Activated T-helper 1 cell treated with anti-CD3 and anti-CD28 coated beads, Interleukin-12 subunit alpha, Interleukin-12 subunit beta, Interleukin-2, Interleukin-4 antibody, amounts not matched to agents 30 ng/mL and 10 ng/mL and 1 ng/mL, durations not matched to agents 14 hours and 24 hours and 36 hours (primary cell): ENCODE measurements at regions of chr3 and their contacts with region 1.

Region 1: GRCh38 chr3:187974871-187975271 is 179.1 kb upstream of the LPP start:
- DNase-seq: no peak
- H3K4me3 Mint-ChIP-seq: peak overlapping the region; percentile 59
- H3K27ac Mint-ChIP-seq: peak overlapping the region; percentile 94
- H3K4me1 Mint-ChIP-seq: peaks cover 62% of the 10 kb centered on the region
- H3K27me3 Mint-ChIP-seq: peaks cover 2% of the 10 kb centered on the region

Region 2: GRCh38 chr3:187745201-187746058 is 229.4 kb before region 1 on chr3 and contains the start of gene BCL6:
- intact Hi-C with region 1: loop called (anchors 1 kb)
- DNase-seq: peak; percentile 88
- H3K4me3 Mint-ChIP-seq: peak within 1 kb of the TSS; percentile 96
- H3K27ac Mint-ChIP-seq: peak within 1 kb of the TSS; percentile 98
- H3K4me1 Mint-ChIP-seq: peaks cover 73% of the 10 kb centered on the region
- H3K27me3 Mint-ChIP-seq: no peaks in the 10 kb centered on the region
- total RNA-seq, gene BCL6: 38.8 and 42.1 TPM in 2 replicates

Region 3: DNA sequence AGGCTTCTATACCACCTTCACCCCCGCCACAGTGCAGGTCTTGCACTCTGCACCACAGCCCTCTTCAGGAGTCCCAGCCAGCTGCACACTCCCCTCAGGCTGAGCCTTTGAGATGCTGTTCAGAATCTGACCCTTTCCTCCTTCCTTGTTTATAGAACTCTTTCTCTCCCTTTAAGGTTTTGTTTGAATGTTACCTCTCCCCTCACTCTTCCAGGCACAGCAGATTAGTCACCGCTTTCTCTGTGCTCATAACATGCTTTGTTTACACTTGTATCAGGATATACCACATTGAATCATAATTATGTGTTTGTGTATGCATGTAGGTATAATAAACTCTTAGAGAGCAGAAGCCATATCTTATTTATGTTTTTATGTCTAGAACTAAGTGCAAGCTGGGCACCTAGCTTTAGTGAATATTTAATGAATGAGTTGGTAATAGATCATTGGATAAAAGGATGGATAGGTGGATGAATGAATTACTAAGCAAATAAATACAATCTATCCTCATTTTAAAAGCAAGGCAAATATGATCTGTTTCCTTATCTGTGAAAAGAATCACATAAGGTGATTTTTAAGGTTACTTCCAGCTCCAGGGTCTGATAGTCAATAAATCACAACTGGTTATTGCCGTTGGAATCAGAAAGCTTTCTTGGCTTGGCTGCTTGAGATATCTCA is 61.1 kb before region 1 on chr3:
- intact Hi-C with region 1: no loop called
- DNase-seq: no peak
- H3K4me3 Mint-ChIP-seq: no peak overlapping the region
- H3K27ac Mint-ChIP-seq: peak overlapping the region; percentile 22
- H3K4me1 Mint-ChIP-seq: peaks cover 68% of the 10 kb centered on the region
- H3K27me3 Mint-ChIP-seq: peaks cover 3% of the 10 kb centered on the region

Region 4: GRCh38 chr3:187935623-187936156 is 39.2 kb before region 1 on chr3:
- intact Hi-C with region 1: loop called (anchors 1 kb)
- DNase-seq: no peak
- H3K4me3 Mint-ChIP-seq: peak overlapping the region; percentile 40
- H3K27ac Mint-ChIP-seq: no peak overlapping the region
- H3K4me1 Mint-ChIP-seq: peaks cover 19% of the 10 kb centered on the region
- H3K27me3 Mint-ChIP-seq: peaks cover 13% of the 10 kb centered on the region

Region 5: DNA sequence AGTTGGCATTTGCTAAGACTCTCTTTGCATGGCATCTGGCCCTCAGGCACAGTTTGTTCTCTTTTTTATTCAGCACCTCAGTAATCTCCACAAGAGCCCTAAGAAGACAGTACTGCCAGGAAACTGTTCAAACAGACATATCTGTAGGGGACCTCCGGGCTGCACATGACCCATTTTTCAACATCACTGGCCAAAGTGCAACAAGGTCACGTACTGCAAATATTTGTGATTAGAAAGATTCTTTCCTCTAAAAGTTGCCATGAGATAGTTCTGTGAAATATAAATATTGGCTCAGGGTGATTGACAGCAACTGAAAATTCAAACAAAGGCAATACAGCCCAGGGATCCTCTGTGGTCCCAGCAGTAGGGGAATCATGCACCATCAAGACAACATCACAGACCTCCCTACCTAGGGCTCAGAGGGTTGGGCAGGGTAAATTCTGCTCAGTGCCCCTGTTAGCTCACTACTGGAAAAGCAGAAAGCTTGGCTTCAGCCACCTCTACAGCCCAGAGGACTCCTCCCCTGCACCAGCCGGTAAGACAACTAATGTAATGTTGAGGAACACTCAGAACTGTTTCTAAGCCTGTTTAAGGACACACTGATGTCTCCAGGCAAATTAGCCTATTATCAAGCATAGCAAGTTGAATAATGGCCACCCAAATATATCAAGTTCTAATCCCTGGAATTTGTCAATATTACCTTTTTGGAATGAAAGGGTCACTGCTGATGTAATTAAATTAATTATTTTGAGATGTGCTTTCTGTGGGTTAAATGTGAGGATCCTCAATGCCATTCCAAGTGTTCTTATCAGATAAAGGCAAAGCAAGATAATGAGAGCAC is 61.7 kb after region 1 on chr3:
- intact Hi-C with region 1: no loop called
- DNase-seq: no peak
- H3K4me3 Mint-ChIP-seq: no peak overlapping the region
- H3K27ac Mint-ChIP-seq: no peak overlapping the region
- H3K4me1 Mint-ChIP-seq: peaks cover 13% of the 10 kb centered on the region
- H3K27me3 Mint-ChIP-seq: peaks cover 5% of the 10 kb centered on the region

Region 6: DNA sequence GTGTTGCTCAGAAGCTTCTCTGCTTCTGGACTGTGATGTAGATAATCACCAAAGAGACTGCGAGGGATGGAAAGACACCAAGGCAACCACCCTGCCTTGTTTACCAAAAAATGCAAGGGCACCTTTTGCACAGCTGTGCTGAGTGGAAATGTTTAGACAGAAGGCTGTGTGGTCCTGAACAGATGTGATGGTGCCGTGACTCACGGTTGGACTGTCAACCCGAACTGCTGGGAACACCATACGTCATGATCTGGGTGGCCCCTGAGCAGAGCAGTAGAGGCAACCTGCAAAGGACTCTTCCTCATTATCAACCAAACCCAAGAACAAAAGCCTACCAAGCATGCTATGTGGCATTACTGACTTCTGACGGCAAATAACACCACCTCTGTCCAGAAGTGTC is 117.8 kb after region 1 on chr3:
- intact Hi-C with region 1: loop called (anchors 1 kb)
- DNase-seq: no peak
- H3K4me3 Mint-ChIP-seq: no peak overlapping the region
- H3K27ac Mint-ChIP-seq: peak overlapping the region; percentile 49
- H3K4me1 Mint-ChIP-seq: peaks cover 14% of the 10 kb centered on the region
- H3K27me3 Mint-ChIP-seq: peaks cover 2% of the 10 kb centered on the region

Region 7: DNA sequence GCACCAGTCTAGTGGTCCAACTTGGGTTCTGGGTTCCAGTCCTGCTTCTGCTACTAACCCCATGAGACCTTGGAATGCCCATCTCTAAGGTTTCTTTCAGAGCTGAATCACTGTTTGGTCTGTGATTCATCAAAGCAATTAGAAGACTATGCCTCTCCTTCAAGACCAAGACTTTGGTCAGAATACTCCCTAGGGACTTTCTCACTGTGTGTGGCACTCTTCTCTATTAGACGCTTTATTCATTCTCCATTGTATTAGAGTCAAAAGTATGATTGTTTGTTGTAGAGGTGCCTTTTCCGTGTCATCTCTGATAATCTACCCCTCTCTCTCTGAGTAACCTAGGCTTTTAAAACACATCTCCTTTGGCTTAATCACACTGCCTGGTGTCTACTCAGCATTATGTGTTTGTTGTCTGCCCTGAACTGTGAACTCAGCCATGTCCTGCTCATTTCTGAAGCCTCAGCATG is 269.6 kb after region 1 on chr3:
- intact Hi-C with region 1: no loop called
- DNase-seq: no peak
- H3K4me3 Mint-ChIP-seq: no peak overlapping the region
- H3K27ac Mint-ChIP-seq: no peak overlapping the region
- H3K4me1 Mint-ChIP-seq: peaks cover 28% of the 10 kb centered on the region
- H3K27me3 Mint-ChIP-seq: no peaks in the 10 kb centered on the region

Region 8: DNA sequence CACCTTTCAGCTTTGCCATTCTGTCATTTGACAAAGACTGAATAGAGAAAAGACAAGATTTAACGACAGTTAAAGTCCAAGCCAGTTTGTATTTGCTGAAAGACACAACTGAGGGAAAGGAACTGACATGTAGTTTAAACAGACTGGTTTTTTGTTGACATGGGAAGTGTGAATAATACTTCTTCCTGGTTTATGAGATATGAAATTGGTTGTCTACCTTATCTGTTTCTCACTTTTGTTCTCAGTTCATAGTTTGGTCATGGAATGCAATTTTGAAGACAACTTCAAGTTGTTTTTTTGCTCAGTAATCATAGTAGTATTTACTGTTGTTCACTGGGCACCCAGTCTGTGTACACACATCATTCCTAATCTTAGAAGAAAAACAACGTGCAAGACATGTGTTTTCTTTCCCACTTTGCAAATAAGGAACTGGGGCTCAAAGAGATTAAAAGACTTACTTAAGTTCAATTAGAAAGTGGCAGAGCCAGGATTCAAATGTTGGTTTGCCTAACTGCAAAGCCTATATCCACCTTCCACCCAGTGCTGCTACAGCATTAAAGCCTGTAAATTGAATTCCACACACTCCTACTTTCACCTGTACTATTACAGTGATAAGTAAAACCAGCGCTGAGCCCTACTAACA is 282.6 kb after region 1 on chr3:
- intact Hi-C with region 1: loop called (anchors 1 kb)
- DNase-seq: no peak
- H3K4me3 Mint-ChIP-seq: no peak overlapping the region
- H3K27ac Mint-ChIP-seq: peak overlapping the region; percentile 63
- H3K4me1 Mint-ChIP-seq: peaks cover 62% of the 10 kb centered on the region
- H3K27me3 Mint-ChIP-seq: peaks cover 2% of the 10 kb centered on the region

Region 9: GRCh38 chr3:189041482-189042090 is 1066.7 kb after region 1 on chr3:
- intact Hi-C with region 1: loop called (anchors 10 kb)
- DNase-seq: peak; percentile 75
- H3K4me3 Mint-ChIP-seq: no peak overlapping the region
- H3K27ac Mint-ChIP-seq: no peak overlapping the region
- H3K4me1 Mint-ChIP-seq: peaks cover 56% of the 10 kb centered on the region
- H3K27me3 Mint-ChIP-seq: peaks cover 4% of the 10 kb centered on the region